Posterior cingulate gyrus (tissue), 11 donors: ENCODE measurements at regions of chr7 and their contacts with region 1.

Region 1: GRCh38 chr7:12322284-12322902 is 81.3 kb downstream of the VWDE start:
- DNase-seq: no peak

Region 2: GRCh38 chr7:11427686-11428273 is 894.6 kb before region 1 on chr7:
- intact Hi-C with region 1: loop called (anchors 2 kb)
- DNase-seq: no peak

Region 3: GRCh38 chr7:11831736-11832495 is 490.5 kb before region 1 on chr7 and contains the start of gene THSD7A:
- intact Hi-C with region 1: loop called (anchors 5 kb)
- DNase-seq: peak; percentile 21 to 92 (median 40)

Region 4: GRCh38 chr7:12067141-12067831 is 255.1 kb before region 1 on chr7:
- intact Hi-C with region 1: loop called (anchors 1 kb)
- DNase-seq: peak in 4 of 10 donors; percentile 17 to 39 (median 28)